ENCODE measurements at regions of chr7 and their contacts with region 1.

Region 1: GRCh38 chr7:31122649-31123058 is 70.5 kb downstream of the ADCYAP1R1 start:
- DNase-seq: peak; percentile 78
- ATAC-seq: peak; percentile 91
- H3K4me3 Mint-ChIP-seq: no peak overlapping the region
- H3K27ac Mint-ChIP-seq: peak overlapping the region; percentile 34; the same call in 1 of the 2 replicates
- H3K4me1 Mint-ChIP-seq: peaks cover 8% of the 10 kb centered on the region
- H3K27me3 Mint-ChIP-seq: peaks cover 7% of the 10 kb centered on the region; the same call in 1 of the 2 replicates
- CTCF ChIP-seq: peak; percentile 60

Region 2: GRCh38 chr7:30791114-30791779 is 331.4 kb before region 1 on chr7:
- CTCF ChIA-PET with region 1: interaction called, 16 read pairs
- POLR2A ChIA-PET with region 1: no interaction called
- DNase-seq: peak; percentile 52
- ATAC-seq: peak; percentile 81
- H3K4me3 Mint-ChIP-seq: no peak overlapping the region
- H3K27ac Mint-ChIP-seq: no peak overlapping the region
- H3K4me1 Mint-ChIP-seq: peaks cover 7% of the 10 kb centered on the region; the same call in 1 of the 2 replicates
- H3K27me3 Mint-ChIP-seq: no peaks in the 10 kb centered on the region
- CTCF ChIP-seq: no peak

Region 3: GRCh38 chr7:30974605-30975255 is 147.9 kb before region 1 on chr7:
- CTCF ChIA-PET with region 1: interaction called, 47 read pairs
- POLR2A ChIA-PET with region 1: no interaction called
- DNase-seq: peak; percentile 82
- ATAC-seq: peak; percentile 86
- H3K4me3 Mint-ChIP-seq: no peak overlapping the region
- H3K27ac Mint-ChIP-seq: no peak overlapping the region
- H3K4me1 Mint-ChIP-seq: peaks cover 8% of the 10 kb centered on the region
- H3K27me3 Mint-ChIP-seq: no peaks in the 10 kb centered on the region; the same call in 1 of the 2 replicates
- CTCF ChIP-seq: peak; percentile 90

Region 4: GRCh38 chr7:31003721-31004120 is 118.9 kb before region 1 on chr7:
- CTCF ChIA-PET with region 1: interaction called, 13 read pairs
- POLR2A ChIA-PET with region 1: no interaction called
- DNase-seq: no peak
- ATAC-seq: 0 out of 2 replicates have a peak, but pooled peaks have one; percentile 30
- H3K4me3 Mint-ChIP-seq: no peak overlapping the region
- H3K27ac Mint-ChIP-seq: no peak overlapping the region
- H3K4me1 Mint-ChIP-seq: peaks cover 7% of the 10 kb centered on the region
- H3K27me3 Mint-ChIP-seq: no peaks in the 10 kb centered on the region
- CTCF ChIP-seq: no peak

Region 5: GRCh38 chr7:31051598-31052486 is 70.8 kb before region 1 on chr7 and contains the start of gene ADCYAP1R1:
- CTCF ChIA-PET with region 1: interaction called, 89 read pairs
- POLR2A ChIA-PET with region 1: no interaction called
- DNase-seq: peak; percentile 68
- ATAC-seq: peak; percentile 86
- H3K4me3 Mint-ChIP-seq: peak within 1 kb of the TSS; percentile 76
- H3K27ac Mint-ChIP-seq: no peak within 1 kb of the TSS
- H3K4me1 Mint-ChIP-seq: peaks cover 26% of the 10 kb centered on the region
- H3K27me3 Mint-ChIP-seq: peaks cover 43% of the 10 kb centered on the region
- CTCF ChIP-seq: no peak
- total RNA-seq, gene ADCYAP1R1: 8.7 to 9.9 TPM (median 9.8 TPM) in 3 replicates

Region 6: GRCh38 chr7:31074120-31074383 is 48.6 kb before region 1 on chr7:
- CTCF ChIA-PET with region 1: interaction called, 17 read pairs
- POLR2A ChIA-PET with region 1: no interaction called
- DNase-seq: no peak
- ATAC-seq: no peak
- H3K4me3 Mint-ChIP-seq: no peak overlapping the region
- H3K27ac Mint-ChIP-seq: no peak overlapping the region
- H3K4me1 Mint-ChIP-seq: peaks cover 10% of the 10 kb centered on the region
- H3K27me3 Mint-ChIP-seq: no peaks in the 10 kb centered on the region
- CTCF ChIP-seq: no peak

Region 7: GRCh38 chr7:31151849-31152248 is 29.2 kb after region 1 on chr7:
- CTCF ChIA-PET with region 1: no interaction called
- POLR2A ChIA-PET with region 1: no interaction called
- DNase-seq: no peak
- ATAC-seq: no peak
- H3K4me3 Mint-ChIP-seq: no peak overlapping the region
- H3K27ac Mint-ChIP-seq: no peak overlapping the region
- H3K4me1 Mint-ChIP-seq: no peaks in the 10 kb centered on the region
- H3K27me3 Mint-ChIP-seq: peaks cover 3% of the 10 kb centered on the region
- CTCF ChIP-seq: no peak

Measured in WTC11 (cell line).